Panc1 (cell line): ENCODE measurements at regions of chr1 and their contacts with region 1.

Region 1: GRCh38 chr1:61162520-61163258 is 80.3 kb downstream of the NFIA start:
- DNase-seq: no peak
- ATAC-seq: no peak
- H3K4me3 ChIP-seq: no peak overlapping the region
- H3K27ac ChIP-seq: no peak overlapping the region
- H3K4me1 ChIP-seq: no peaks in the 10 kb centered on the region; the same call in 1 of the 2 replicates
- H3K27me3 ChIP-seq: no peaks in the 10 kb centered on the region
- CTCF ChIP-seq: no peak

Region 2: GRCh38 chr1:59285691-59286090 is 1877.0 kb before region 1 on chr1:
- CTCF ChIA-PET with region 1: no interaction called
- POLR2A ChIA-PET with region 1: no interaction called
- in situ Hi-C with region 1: no loop called
- intact Hi-C with region 1: no loop called
- DNase-seq: no peak
- ATAC-seq: no peak
- H3K4me3 ChIP-seq: no peak overlapping the region
- H3K27ac ChIP-seq: no peak overlapping the region
- H3K4me1 ChIP-seq: no peaks in the 10 kb centered on the region
- H3K27me3 ChIP-seq: no peaks in the 10 kb centered on the region
- CTCF ChIP-seq: no peak

Region 3: GRCh38 chr1:60904089-60904851 is 258.4 kb before region 1 on chr1:
- CTCF ChIA-PET with region 1: no interaction called
- POLR2A ChIA-PET with region 1: no interaction called
- in situ Hi-C with region 1: no loop called
- intact Hi-C with region 1: no loop called
- DNase-seq: no peak
- ATAC-seq: no peak
- H3K4me3 ChIP-seq: no peak overlapping the region
- H3K27ac ChIP-seq: no peak overlapping the region
- H3K4me1 ChIP-seq: no peaks in the 10 kb centered on the region
- H3K27me3 ChIP-seq: no peaks in the 10 kb centered on the region
- CTCF ChIP-seq: no peak

Region 4: DNA sequence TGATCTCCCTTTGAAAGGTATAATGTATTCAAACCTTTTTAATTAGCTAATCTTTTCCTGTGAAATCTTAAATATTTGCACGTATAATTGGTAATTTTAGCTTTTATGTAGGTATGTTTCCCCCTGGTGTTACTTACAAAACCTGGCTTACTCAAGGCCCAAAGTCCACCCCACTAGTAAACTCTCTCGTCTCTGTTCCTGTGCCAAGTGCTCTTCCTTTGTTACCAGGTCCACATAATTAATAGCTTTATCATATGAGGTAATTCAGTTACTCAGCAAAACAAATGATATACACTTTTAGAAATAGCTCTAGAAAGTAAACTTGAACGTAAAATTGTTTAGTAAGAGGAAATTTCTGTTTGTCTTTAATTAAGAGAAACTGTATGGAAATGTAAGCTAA is 43.6 kb before region 1 on chr1:
- CTCF ChIA-PET with region 1: no interaction called
- POLR2A ChIA-PET with region 1: no interaction called
- in situ Hi-C with region 1: no loop called
- intact Hi-C with region 1: no loop called
- DNase-seq: no peak
- ATAC-seq: no peak
- H3K4me3 ChIP-seq: no peak overlapping the region
- H3K27ac ChIP-seq: no peak overlapping the region
- H3K4me1 ChIP-seq: peaks cover 6% of the 10 kb centered on the region
- H3K27me3 ChIP-seq: no peaks in the 10 kb centered on the region
- CTCF ChIP-seq: no peak

Region 5: DNA sequence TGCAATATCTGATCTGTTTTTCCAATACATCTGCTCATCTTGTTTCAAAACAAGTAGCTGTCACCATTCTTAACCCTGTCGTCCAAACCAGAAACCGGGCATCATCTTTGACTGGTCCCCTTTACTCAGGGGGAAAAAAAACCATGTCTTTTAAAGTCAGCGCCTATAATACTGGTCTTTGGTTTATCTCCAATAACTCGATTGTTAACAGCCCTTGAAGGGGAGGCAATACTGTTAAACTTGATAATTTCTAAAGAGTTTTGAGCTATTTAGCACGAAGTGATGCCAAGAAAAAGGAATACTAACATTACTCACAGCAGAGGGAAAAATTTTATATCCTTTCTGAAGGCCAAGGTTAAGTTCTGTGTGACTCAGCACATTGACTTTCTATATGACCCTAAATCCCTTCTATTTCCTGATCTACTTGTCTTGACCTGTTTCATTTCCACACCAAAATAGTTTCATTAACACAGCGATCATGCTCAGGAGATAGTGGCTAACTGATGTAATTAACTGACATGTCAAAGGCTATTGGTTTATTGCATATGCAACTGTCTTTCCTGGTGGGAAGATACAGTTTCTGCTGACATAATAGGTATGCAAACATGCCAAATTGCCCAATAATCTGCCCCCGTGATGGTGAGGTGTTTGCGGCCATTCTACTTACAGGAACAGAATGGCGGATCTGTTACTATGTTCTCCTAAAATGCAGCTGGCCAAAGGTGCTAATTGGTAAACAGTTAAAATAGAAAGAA is 21.2 kb before region 1 on chr1:
- CTCF ChIA-PET with region 1: interaction called, 5 read pairs
- POLR2A ChIA-PET with region 1: interaction called, 12 read pairs
- in situ Hi-C with region 1: no loop called
- intact Hi-C with region 1: no loop called
- DNase-seq: peak; percentile 15
- ATAC-seq: no peak
- H3K4me3 ChIP-seq: no peak overlapping the region
- H3K27ac ChIP-seq: peak overlapping the region; percentile 0; the same call in 1 of the 2 replicates
- H3K4me1 ChIP-seq: peaks cover 21% of the 10 kb centered on the region
- H3K27me3 ChIP-seq: no peaks in the 10 kb centered on the region
- CTCF ChIP-seq: no peak